Activated naive CD4-positive, alpha-beta T cell treated with anti-CD3 and anti-CD28 coated beads for 36 hours (primary cell): ENCODE measurements at regions of chr2 and their contacts with region 1.

Region 1: GRCh38 chr2:218269899-218270720 is at the starts of genes AAMP and PNKD:
- DNase-seq: peak; percentile 100
- H3K4me3 Mint-ChIP-seq: peak within 1 kb of the TSS; percentile 80
- H3K27ac Mint-ChIP-seq: peak within 1 kb of the TSS; percentile 87
- H3K4me1 Mint-ChIP-seq: peaks cover 42% of the 10 kb centered on the region
- H3K27me3 Mint-ChIP-seq: no peaks in the 10 kb centered on the region
- total RNA-seq, gene AAMP: 58.7 to 59.4 TPM
- total RNA-seq, gene PNKD: 20.4 to 21.4 TPM

Region 2: DNA sequence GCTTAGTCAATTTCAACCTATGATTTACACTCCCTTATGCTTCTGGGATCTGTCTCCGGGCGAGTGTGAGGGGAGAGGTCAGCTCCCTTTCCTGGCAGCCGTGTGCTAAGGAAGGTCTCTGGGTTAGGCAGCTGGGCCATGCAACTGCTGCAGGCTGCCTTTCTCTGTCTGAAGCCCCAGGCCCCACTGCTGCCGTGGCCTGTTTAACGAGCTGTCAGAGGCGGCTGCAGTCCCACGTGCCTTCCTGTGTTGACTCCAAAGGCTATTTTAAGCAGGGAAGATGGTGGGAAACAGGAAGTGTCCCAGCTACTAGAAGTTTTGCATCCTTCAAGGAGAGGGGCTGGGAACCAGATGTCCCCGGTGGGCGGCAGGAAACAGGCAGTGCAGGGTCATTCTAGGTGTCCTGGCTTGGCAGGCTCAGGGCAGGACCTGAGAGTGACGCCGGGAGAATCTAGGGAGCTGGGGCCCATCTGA is 453.7 kb before region 1 on chr2:
- CTCF ChIA-PET with region 1: no interaction called
- intact Hi-C with region 1: no loop called
- DNase-seq: no peak
- H3K4me3 Mint-ChIP-seq: no peak overlapping the region
- H3K27ac Mint-ChIP-seq: no peak overlapping the region
- H3K4me1 Mint-ChIP-seq: no peaks in the 10 kb centered on the region
- H3K27me3 Mint-ChIP-seq: peaks cover 3% of the 10 kb centered on the region

Region 3: DNA sequence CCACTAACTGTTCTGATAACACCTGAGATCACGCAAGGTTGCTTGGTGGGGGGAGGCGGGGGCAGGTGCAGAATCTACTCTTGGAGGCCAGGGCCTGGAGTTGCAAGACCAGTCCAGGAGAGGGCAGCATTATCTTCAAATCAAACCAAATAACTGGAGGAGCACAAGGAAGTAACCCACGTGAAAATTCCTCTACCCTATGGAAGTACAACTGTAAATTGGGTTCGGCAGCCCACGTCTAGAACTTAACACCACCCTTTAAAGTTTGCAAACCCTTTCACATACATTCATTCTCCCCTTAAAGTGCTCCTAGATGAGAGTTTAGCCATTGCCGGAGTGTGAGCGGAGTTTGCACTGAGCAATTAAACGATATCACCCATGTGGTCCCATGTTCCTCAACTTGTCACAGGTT is 83.7 kb before region 1 on chr2:
- CTCF ChIA-PET with region 1: interaction called, 6 read pairs
- intact Hi-C with region 1: loop called (anchors 1 kb)
- DNase-seq: peak; percentile 87
- H3K4me3 Mint-ChIP-seq: no peak overlapping the region
- H3K27ac Mint-ChIP-seq: no peak overlapping the region
- H3K4me1 Mint-ChIP-seq: peaks cover 7% of the 10 kb centered on the region
- H3K27me3 Mint-ChIP-seq: no peaks in the 10 kb centered on the region

Region 4: DNA sequence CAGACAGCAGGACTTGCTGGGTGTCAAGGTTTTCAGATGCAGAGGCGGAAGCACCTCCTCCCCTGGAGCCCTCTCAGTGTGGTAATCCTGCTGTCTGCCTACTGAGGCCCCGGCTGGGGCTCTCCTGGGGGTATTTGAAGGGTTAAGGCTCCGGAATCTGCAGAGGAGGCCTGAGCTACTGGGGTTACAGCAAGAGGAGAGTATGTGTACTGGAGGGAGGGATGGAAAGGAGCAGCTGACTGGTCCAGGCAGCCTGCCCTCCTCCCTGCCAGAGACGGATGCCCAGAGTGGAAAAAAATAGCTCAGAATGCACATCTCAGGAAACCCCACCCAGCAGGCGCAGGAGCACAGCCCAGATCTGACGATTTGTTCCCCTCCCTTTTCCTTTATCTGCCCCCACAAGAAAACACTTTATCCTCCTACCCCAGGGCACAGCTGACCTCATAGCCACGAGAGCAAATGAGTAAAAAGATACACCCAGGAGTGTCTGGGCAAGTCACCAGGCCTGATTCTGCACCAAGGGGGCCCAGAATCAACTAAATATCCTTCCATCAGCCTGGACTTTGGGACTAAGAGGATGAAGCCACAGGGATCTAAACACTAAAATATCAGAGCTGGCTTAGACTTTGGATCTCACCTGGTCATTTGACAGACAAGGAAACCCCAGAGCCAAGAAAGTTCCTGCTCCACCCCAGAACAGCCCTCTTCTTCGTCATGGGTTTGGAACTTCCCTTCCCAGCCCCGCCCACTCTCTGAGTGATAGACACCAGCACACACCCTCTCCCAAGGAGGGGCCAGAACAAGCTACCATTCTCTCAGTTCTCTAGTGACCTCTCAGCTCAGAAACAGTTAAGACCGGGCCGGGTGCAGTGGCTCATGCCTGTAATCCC is 16.7 kb after region 1 on chr2:
- CTCF ChIA-PET with region 1: interaction called, 214 read pairs
- intact Hi-C with region 1: loop called (anchors 1 kb)
- DNase-seq: peak; percentile 95
- H3K4me3 Mint-ChIP-seq: peak overlapping the region; percentile 80
- H3K27ac Mint-ChIP-seq: peak overlapping the region; percentile 98
- H3K4me1 Mint-ChIP-seq: peaks cover 73% of the 10 kb centered on the region
- H3K27me3 Mint-ChIP-seq: no peaks in the 10 kb centered on the region

Region 5: DNA sequence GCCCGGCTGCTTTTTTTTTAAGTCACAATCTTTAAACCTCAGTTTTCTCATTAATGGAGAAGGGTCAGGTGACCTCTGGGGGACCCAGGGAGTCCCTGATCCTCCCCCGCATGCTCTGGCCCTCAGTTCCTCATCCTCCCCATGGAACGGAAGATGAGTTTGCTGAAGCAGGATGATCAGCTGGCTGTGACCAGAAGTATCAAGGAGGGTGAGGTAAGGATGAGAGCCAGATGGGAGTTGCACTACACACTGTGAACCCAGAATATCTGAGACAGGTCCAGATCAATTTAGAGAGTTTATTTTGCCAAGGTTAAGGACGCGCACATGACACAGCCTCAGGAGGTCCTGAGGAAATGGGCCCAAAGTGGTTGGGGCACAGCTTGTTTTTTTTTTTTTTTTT is 90.3 kb after region 1 on chr2:
- CTCF ChIA-PET with region 1: interaction called, 20 read pairs
- intact Hi-C with region 1: loop called (anchors 1 kb)
- DNase-seq: no peak
- H3K4me3 Mint-ChIP-seq: no peak overlapping the region
- H3K27ac Mint-ChIP-seq: no peak overlapping the region
- H3K4me1 Mint-ChIP-seq: no peaks in the 10 kb centered on the region
- H3K27me3 Mint-ChIP-seq: no peaks in the 10 kb centered on the region

Region 6: DNA sequence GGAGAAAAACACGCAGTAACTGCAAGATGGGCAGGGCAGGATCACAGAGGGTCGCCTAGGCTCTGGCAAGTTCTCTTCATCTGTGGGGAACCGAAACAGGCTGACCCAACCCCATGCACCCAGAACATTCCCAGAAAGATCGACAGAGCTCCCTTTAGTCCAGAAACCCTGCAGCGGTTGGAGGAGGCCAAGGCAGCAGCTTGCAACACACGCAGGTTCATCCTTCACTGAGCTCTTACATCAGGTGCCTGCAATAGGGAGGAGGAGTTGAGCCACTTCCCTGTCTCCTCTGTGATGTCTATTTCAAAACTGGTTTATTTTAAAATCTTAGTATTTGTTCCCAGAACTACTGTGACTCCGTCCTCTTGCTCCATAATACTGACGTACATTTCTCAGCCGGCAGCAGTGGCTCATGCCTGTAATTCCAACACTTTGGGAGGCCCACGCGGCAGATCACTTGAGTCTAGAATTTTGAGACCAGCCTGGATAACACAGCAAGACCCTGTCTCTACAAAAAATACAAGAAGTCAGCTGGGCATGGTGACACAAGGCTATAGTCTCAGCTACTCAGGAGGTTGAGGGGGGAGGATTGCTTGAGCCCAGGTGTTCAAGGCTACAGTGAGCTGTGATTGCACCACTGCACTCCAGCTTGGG is 100.4 kb after region 1 on chr2:
- CTCF ChIA-PET with region 1: no interaction called
- intact Hi-C with region 1: no loop called
- DNase-seq: no peak
- H3K4me3 Mint-ChIP-seq: no peak overlapping the region
- H3K27ac Mint-ChIP-seq: no peak overlapping the region
- H3K4me1 Mint-ChIP-seq: peaks cover 13% of the 10 kb centered on the region
- H3K27me3 Mint-ChIP-seq: no peaks in the 10 kb centered on the region

Region 7: DNA sequence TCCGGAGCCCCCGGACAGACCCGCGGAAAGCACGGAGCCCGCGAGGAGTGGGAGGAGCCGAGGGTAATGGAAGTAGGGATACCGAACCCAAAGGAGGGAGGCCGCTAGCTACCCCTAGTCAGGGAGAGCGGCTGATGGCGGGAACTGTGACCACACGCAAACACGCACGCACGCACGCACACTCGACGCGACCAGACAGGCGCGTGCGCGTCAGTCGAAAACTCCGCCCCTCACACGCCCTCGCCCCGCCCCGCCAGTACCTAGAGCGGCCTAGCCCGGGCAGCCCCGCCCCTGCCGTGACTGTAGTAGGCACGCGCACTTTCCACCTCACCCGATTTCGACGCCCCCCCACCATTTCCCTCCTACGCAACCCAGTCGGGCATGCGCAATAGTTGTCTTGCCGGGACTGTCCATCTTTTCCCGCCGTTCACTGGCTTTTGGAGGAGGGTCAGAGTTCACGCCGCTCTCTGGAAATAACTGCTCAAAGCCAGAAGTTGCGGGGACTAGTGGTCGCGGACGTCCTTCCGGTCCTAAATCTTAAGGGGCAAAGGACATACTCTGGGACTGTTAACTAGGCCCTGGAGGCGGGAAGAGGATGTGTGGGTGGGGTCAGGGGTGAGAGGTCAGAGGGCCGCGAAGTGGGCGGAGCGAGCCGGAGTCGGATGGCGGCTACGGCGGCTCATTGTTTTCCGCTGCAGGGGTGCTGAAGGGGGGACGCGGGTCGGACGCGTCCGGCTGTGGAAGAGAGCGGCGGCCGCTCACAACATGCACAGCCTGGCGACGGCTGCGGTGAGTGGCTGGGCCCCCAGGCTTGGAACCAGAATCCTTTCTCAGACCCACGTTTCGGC is 298.3 kb after region 1 on chr2 and contains the starts of genes CNOT9 and USP37:
- CTCF ChIA-PET with region 1: interaction called, 3 read pairs
- intact Hi-C with region 1: loop called (anchors 1 kb)
- DNase-seq: peak; percentile 100
- H3K4me3 Mint-ChIP-seq: peak within 1 kb of the TSS; percentile 91
- H3K27ac Mint-ChIP-seq: peak within 1 kb of the TSS; percentile 100
- H3K4me1 Mint-ChIP-seq: peaks cover 60% of the 10 kb centered on the region
- H3K27me3 Mint-ChIP-seq: no peaks in the 10 kb centered on the region
- total RNA-seq, gene CNOT9: 74.3 to 78.6 TPM
- total RNA-seq, gene USP37: 21.7 to 23.2 TPM

Region 8: DNA sequence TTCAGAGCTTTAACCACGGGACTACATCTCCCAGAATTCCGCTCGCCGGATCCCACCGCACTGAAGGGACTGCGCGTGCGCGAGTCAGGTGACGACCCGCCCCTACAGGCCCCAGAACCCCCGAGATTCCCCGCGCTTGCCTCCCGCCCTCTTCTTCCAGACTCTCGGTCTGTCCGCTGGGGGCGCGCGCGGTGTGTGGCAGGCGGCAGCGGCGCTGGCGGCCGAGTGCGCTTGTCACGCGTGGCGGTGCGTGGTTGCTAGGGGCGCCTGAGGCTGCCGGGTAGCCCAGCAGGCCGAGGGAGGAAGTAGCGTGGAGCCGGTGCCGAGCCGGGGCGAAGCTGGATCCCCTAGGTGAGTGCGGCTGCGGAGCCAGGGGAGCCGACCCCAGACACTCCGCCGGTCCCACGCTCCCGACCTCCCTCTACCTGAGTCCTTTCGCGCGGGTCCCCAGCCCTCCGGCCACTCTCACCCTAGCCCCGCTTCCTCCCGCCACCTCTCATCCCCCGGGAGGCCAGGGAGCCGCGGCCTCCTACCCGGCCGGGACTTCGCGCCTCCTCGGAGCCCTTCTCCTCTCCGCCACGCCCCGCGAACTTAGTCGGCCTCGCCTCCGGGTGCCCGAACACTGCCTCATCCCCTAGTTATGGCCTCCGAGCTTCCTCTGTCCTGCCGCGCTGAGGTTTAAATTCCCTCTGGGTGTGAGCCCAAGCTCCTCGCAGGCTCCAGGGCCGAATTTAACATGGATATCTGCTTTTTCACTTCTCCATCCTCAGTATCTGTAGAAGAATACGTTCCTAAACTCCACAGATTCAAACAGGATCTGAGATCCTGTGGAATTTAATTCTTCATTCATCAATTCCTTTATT is 440.8 kb after region 1 on chr2 and contains the start of gene TTLL4:
- CTCF ChIA-PET with region 1: no interaction called
- intact Hi-C with region 1: loop called (anchors 1 kb)
- DNase-seq: peak; percentile 99
- H3K4me3 Mint-ChIP-seq: peak within 1 kb of the TSS; percentile 98
- H3K27ac Mint-ChIP-seq: peak within 1 kb of the TSS; percentile 80
- H3K4me1 Mint-ChIP-seq: peaks cover 15% of the 10 kb centered on the region
- H3K27me3 Mint-ChIP-seq: peaks cover 3% of the 10 kb centered on the region
- total RNA-seq, gene TTLL4: 23.7 to 24.7 TPM

Region 9: GRCh38 chr2:218781691-218782527 is 511.8 kb after region 1 on chr2 and contains the start of gene CYP27A1:
- CTCF ChIA-PET with region 1: no interaction called
- intact Hi-C with region 1: no loop called
- DNase-seq: no peak
- H3K4me3 Mint-ChIP-seq: no peak within 1 kb of the TSS
- H3K27ac Mint-ChIP-seq: no peak within 1 kb of the TSS
- H3K4me1 Mint-ChIP-seq: peaks cover 3% of the 10 kb centered on the region
- H3K27me3 Mint-ChIP-seq: peaks cover 40% of the 10 kb centered on the region
- total RNA-seq, gene CYP27A1: not detected

Region 10: GRCh38 chr2:219243291-219243761 is 973.2 kb after region 1 on chr2:
- CTCF ChIA-PET with region 1: no interaction called
- intact Hi-C with region 1: no loop called
- DNase-seq: no peak
- H3K4me3 Mint-ChIP-seq: peak overlapping the region; percentile 68
- H3K27ac Mint-ChIP-seq: no peak overlapping the region
- H3K4me1 Mint-ChIP-seq: peaks cover 37% of the 10 kb centered on the region
- H3K27me3 Mint-ChIP-seq: no peaks in the 10 kb centered on the region